Heart left ventricle (tissue), 16 donors: ENCODE measurements at regions of chr10 and their contacts with region 1.

Region 1: DNA sequence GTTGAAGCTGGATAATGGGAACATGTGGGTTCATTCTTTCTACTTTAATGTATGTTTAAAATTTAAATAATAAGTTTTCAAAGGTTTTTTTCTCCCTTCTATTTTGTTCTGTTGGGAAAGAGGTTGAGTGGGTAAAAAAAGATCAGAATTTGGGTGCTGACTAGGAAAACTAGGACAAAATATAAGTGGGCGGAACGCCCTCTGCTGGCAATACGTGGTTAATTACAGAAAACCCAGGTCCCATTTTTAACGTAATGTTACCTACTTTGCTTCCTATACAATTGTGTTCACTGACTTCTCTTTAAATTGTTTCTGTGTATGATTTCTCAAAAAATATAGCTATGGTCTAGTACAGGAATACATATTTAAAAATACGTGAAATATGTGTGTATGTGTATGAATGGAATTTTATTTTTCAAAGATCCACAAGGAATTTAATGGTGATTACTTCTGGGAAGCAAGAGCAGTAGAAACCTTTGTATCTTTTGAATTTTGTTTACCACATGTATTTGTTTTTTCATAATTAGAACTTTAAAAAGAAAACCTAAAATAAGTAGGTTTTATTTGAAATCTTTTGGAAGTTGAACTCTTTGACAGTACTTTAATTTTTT is 8.7 kb downstream of the ECD start:
- DNase-seq: peak in 4 of 5 donors; percentile 32 to 49 (median 36)
- ATAC-seq: no peak
- H3K4me3 ChIP-seq: no peak overlapping the region
- H3K27ac ChIP-seq: no peak overlapping the region
- H3K4me1 ChIP-seq: peaks cover 0 to 32% (median 16%) of the 10 kb centered on the region in 12 donors
- H3K27me3 ChIP-seq: no peaks in the 10 kb centered on the region
- CTCF ChIP-seq: peak; percentile 66 to 87 (median 75)
- POLR2A ChIP-seq: no peak

Region 2: DNA sequence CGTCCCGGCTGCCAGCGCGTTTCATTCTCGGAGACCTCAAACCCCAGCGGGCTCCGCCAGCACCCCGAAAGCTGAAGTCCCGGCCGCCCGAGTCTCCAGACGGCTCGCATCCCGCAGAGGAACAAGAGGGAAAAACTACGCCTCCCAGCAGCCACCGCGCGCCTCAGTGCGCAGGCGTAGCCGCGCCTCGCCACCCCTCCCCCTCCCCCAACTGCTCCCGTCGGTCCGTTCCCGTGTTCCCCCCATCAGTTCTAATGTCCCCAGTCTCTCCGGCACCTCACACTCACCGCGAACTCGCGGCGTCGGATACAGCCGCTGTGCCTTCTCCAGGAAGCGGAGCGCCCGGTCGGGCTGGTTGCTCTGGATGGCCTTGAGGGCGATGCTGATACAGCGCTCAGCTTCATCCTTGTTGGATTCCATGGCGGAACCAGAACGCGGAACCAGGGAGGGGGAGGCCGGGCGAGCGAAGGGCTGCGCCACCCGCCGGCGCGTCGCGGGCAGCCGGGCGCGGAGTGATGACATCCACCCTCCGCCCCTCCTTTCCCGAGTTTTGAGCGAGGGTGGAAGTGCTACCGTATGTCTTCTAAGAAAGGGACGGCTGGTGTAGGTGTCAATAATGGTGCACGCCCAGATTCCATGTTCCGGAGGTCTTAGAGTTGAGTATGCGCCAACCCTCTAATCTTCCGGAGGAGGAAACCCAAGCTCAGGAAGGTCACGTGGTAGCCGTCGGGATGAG is 804.5 kb before region 1 on chr10 and contains the start of gene DNAJB12:
- intact Hi-C with region 1: loop called in 1 of 10 experiments (anchors 5 kb)
- DNase-seq: peak; percentile 92 to 95 (median 92)
- ATAC-seq: peak; percentile 85 to 94 (median 92)
- H3K4me3 ChIP-seq: peak within 1 kb of the TSS; percentile 73 to 98 (median 90)
- H3K27ac ChIP-seq: peak within 1 kb of the TSS; percentile 87 to 98 (median 97)
- H3K4me1 ChIP-seq: peaks cover 0 to 42% (median 30%) of the 10 kb centered on the region in 12 donors
- H3K27me3 ChIP-seq: no peaks in the 10 kb centered on the region
- CTCF ChIP-seq: peak in 1 of 12 donors; percentile 10
- POLR2A ChIP-seq: peak in 1 of 2 donors; percentile 69
- total RNA-seq, gene DNAJB12: 23.8 to 42.5 (median 29.1) TPM

Region 3: GRCh38 chr10:72821606-72822005 is 337.5 kb before region 1 on chr10:
- intact Hi-C with region 1: no loop called
- DNase-seq: no peak
- ATAC-seq: no peak
- H3K4me3 ChIP-seq: no peak overlapping the region
- H3K27ac ChIP-seq: no peak overlapping the region
- H3K4me1 ChIP-seq: peaks cover 0 to 18% (median 4%) of the 10 kb centered on the region in 12 donors
- H3K27me3 ChIP-seq: no peaks in the 10 kb centered on the region
- CTCF ChIP-seq: no peak
- POLR2A ChIP-seq: no peak

Region 4: GRCh38 chr10:73096449-73097304 is 62.5 kb before region 1 on chr10 and contains the start of gene P4HA1:
- intact Hi-C with region 1: loop called in 7 of 10 experiments (anchors 2 to 10 kb)
- DNase-seq: peak; percentile 99 to 100 (median 100)
- ATAC-seq: peak; percentile 96 to 98 (median 97)
- H3K4me3 ChIP-seq: peak within 1 kb of the TSS; percentile 47 to 93 (median 86)
- H3K27ac ChIP-seq: peak within 1 kb of the TSS; percentile 90 to 99 (median 97)
- H3K4me1 ChIP-seq: peaks cover 0 to 42% (median 19%) of the 10 kb centered on the region in 12 donors
- H3K27me3 ChIP-seq: no peaks in the 10 kb centered on the region
- CTCF ChIP-seq: peak; percentile 49 to 87 (median 72)
- POLR2A ChIP-seq: peak in 1 of 2 donors; percentile 98
- total RNA-seq, gene P4HA1: 44.5 to 71.7 (median 54.2) TPM

Region 5: GRCh38 chr10:73131301-73131700 is 27.8 kb before region 1 on chr10:
- intact Hi-C with region 1: loop called in 1 of 10 experiments (anchors 5 kb)
- DNase-seq: no peak
- ATAC-seq: no peak
- H3K4me3 ChIP-seq: no peak overlapping the region
- H3K27ac ChIP-seq: no peak overlapping the region
- H3K4me1 ChIP-seq: no peaks in the 10 kb centered on the region
- H3K27me3 ChIP-seq: no peaks in the 10 kb centered on the region
- CTCF ChIP-seq: no peak
- POLR2A ChIP-seq: no peak

Region 6: DNA sequence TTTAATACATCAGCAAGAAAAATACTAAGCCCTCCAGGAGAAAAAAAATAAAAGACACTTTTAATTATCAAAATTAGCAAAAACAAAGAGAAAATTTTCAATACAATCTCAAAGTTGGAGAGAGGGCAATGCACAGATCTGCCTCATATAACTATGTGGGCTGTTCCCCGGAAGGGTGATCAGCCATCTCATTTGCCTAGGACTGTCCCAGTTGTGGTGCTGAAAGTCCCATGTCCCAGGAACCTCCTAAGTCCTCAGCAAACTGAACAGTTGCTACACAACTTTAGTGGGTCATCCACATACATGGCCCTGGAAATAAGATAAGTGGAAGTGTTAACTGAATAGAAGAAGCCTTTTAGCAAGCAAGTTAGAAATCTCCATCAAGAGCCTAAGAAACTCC is 185.1 kb after region 1 on chr10:
- intact Hi-C with region 1: no loop called
- DNase-seq: no peak
- ATAC-seq: no peak
- H3K4me3 ChIP-seq: no peak overlapping the region
- H3K27ac ChIP-seq: no peak overlapping the region
- H3K4me1 ChIP-seq: no peaks in the 10 kb centered on the region
- H3K27me3 ChIP-seq: no peaks in the 10 kb centered on the region
- CTCF ChIP-seq: no peak
- POLR2A ChIP-seq: no peak

Region 7: GRCh38 chr10:73366381-73367298 is 207.5 kb after region 1 on chr10:
- intact Hi-C with region 1: no loop called
- DNase-seq: no peak
- ATAC-seq: no peak
- H3K4me3 ChIP-seq: no peak overlapping the region
- H3K27ac ChIP-seq: no peak overlapping the region
- H3K4me1 ChIP-seq: no peaks in the 10 kb centered on the region
- H3K27me3 ChIP-seq: no peaks in the 10 kb centered on the region
- CTCF ChIP-seq: no peak
- POLR2A ChIP-seq: no peak